Transverse colon (tissue), 4 donors: ENCODE measurements at regions of chr7 and their contacts with region 1.

Region 1: DNA sequence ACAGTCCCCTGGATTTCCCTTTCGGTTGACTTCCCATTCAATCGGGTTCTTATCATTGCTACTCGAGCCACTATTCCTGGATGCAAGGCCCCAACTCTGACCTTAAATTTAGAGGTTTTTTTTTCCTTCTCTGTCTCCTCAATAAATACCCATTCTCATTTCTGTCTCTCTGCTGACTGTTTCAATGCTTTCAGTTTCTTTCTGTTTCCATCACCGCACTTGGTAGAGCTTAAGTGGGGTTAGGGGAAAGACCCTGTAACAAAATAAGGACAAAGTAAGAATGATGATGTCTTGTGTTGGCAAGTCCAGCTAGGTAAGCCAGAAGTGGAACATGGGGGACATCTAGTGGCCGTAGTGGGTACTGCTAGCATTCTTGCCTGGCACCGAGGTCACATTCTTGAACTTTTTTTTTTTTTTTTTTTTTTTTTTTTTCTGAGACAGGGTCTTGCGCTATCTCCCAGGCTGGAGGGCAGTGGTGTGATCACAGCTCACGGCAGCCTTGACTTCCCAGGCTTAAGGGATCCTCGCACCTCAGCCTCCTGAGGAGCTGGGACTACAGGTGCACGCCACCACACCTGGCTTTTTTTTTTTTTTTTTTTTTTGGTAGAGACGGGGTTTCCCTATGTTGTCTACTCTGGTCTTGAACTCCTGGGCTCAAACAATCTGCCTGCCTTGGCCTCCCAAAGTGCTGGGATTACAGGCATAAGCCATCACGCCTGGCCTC is 40.3 kb downstream of the ZC3HC1 start:
- DNase-seq: peak; percentile 90
- H3K4me3 ChIP-seq: no peak overlapping the region
- H3K27ac ChIP-seq: peak overlapping the region in 1 of 4 donors; percentile 18
- H3K4me1 ChIP-seq: peaks cover 0 to 4% (median 0%) of the 10 kb centered on the region in 4 donors
- H3K27me3 ChIP-seq: no peaks in the 10 kb centered on the region
- CTCF ChIP-seq: peak; percentile 92 to 98 (median 92)
- EP300 ChIP-seq: no peak
- POLR2A ChIP-seq: no peak

Region 2: DNA sequence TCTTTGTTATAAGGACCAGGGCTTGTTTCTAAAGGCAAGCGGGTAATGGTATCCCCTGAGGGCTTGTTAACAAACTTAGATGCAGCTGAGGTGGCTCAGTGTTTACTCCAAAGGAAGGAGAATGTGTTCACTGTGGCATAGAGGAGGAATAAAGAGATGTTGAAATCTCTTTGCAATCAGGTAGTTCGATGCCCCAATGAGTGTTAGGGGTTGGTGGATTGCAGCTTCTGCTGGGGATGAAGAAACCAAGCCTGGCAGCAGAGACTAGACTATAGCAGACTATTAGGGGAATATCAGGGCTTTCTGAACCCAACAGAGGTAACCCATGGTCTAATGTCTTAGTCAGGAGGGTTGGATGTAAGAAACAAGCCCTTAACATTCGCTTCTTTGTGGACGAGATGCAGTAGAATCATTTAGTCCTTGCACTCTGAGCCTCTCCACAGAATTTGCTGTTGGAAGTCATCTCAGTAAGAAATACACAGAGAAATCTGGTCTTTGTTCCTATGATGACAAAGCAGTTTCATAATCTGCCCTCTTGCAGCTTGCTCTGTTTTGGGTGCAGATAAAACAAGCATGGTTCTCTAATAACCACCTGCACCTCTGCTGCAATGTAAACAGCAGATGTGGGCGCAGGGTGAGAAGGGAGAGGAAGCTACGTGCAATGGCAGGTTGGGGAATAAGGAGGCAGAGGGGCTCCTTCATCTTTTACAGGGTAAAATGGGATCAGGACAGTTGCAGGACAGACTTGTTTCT is 290.7 kb before region 1 on chr7:
- in situ Hi-C with region 1: loop called in 1 of 4 experiments (anchors 25 kb)
- intact Hi-C with region 1: no loop called
- DNase-seq: no peak
- H3K4me3 ChIP-seq: no peak overlapping the region
- H3K27ac ChIP-seq: no peak overlapping the region
- H3K4me1 ChIP-seq: no peaks in the 10 kb centered on the region
- H3K27me3 ChIP-seq: no peaks in the 10 kb centered on the region
- CTCF ChIP-seq: no peak
- EP300 ChIP-seq: no peak
- POLR2A ChIP-seq: no peak

Region 3: GRCh38 chr7:129825496-129826267 is 185.2 kb before region 1 on chr7:
- in situ Hi-C with region 1: loop called (anchors 10 to 25 kb)
- intact Hi-C with region 1: loop called (anchors 10 kb)
- DNase-seq: peak; percentile 92
- H3K4me3 ChIP-seq: peak overlapping the region; percentile 39 to 63 (median 49)
- H3K27ac ChIP-seq: peak overlapping the region; percentile 31 to 74 (median 58)
- H3K4me1 ChIP-seq: peaks cover 6 to 26% (median 20%) of the 10 kb centered on the region in 4 donors
- H3K27me3 ChIP-seq: no peaks in the 10 kb centered on the region
- CTCF ChIP-seq: peak; percentile 54 to 99 (median 99)
- EP300 ChIP-seq: no peak
- POLR2A ChIP-seq: no peak

Region 4: GRCh38 chr7:129986600-129986999 is 24.3 kb before region 1 on chr7:
- in situ Hi-C with region 1: no loop called
- intact Hi-C with region 1: no loop called
- DNase-seq: no peak
- H3K4me3 ChIP-seq: no peak overlapping the region
- H3K27ac ChIP-seq: no peak overlapping the region
- H3K4me1 ChIP-seq: peaks cover 0 to 2% (median 0%) of the 10 kb centered on the region in 4 donors
- H3K27me3 ChIP-seq: no peaks in the 10 kb centered on the region
- CTCF ChIP-seq: no peak
- EP300 ChIP-seq: no peak
- POLR2A ChIP-seq: no peak

Region 5: GRCh38 chr7:131071786-131072504 is 1061.1 kb after region 1 on chr7:
- in situ Hi-C with region 1: no loop called
- intact Hi-C with region 1: no loop called
- DNase-seq: peak; percentile 27
- H3K4me3 ChIP-seq: peak overlapping the region in 1 of 4 donors; percentile 4
- H3K27ac ChIP-seq: peak overlapping the region; percentile 35 to 66 (median 42)
- H3K4me1 ChIP-seq: peaks cover 9 to 62% (median 31%) of the 10 kb centered on the region in 4 donors
- H3K27me3 ChIP-seq: no peaks in the 10 kb centered on the region
- CTCF ChIP-seq: peak; percentile 12 to 46 (median 29)
- EP300 ChIP-seq: no peak
- POLR2A ChIP-seq: no peak